ENCODE measurements at regions of chr22 and their contacts with region 1.

Region 1: GRCh38 chr22:19984201-19984753 is 32.3 kb downstream of the ARVCF start:
- DNase-seq: peak; percentile 71
- ATAC-seq: peak; percentile 56

Region 2: GRCh38 chr22:20000169-20000621 is 15.9 kb after region 1 on chr22:
- intact Hi-C with region 1: loop called (anchors 2 kb)
- DNase-seq: peak; percentile 71
- ATAC-seq: peak; percentile 82

Measured in Right ventricle myocardium inferior (tissue), 1 donor.